ENCODE measurements at regions of chr12 and their contacts with region 1.

Region 1: DNA sequence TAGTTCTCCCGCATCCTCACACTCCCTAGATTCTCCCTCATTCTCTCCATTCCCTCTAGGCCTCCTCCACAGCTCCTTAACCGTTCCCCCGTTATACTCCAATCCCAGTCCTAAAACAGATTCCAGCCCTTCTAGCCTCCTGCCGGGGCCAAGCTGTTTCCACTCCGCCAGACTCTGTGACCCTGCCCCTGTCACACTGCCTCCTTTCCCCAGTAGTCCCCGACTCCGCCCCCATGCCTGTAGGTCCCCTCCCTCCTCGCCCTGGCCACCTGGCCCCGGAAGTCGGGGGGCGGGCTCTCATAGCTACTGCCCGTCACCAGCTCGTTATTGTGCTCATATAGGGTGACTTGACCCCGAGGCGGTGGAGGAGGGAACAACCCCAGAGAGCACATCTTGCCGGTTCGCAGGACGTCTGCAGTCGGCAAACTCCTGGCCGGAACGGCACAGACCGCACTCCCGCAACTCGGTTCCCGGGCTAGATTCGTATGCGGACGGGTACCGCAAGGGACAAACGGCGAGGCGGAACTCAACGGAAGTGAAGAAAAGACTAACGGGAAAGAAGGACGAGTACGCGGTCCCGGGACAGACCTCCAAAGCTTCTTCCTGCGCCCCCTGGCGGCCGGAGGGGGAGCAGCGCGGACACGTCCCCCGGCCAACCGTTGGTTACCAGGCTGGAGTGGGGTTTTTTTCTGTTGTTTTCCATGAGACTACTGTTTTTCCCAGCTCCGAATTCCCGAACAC is at the start of gene AAAS:
- DNase-seq: peak; percentile 99
- ATAC-seq: peak; percentile 86
- H3K4me3 Mint-ChIP-seq: peak within 1 kb of the TSS; percentile 92
- H3K27ac Mint-ChIP-seq: peak within 1 kb of the TSS; percentile 97
- H3K4me1 Mint-ChIP-seq: peaks cover 39% of the 10 kb centered on the region
- H3K27me3 Mint-ChIP-seq: no peaks in the 10 kb centered on the region
- total RNA-seq, gene AAAS: 60.9 to 61.7 TPM

Region 2: GRCh38 chr12:53113136-53113705 is 208.0 kb before region 1 on chr12:
- CTCF ChIA-PET with region 1: no interaction called
- DNase-seq: peak; percentile 29
- ATAC-seq: no peak
- H3K4me3 Mint-ChIP-seq: no peak overlapping the region
- H3K27ac Mint-ChIP-seq: no peak overlapping the region
- H3K4me1 Mint-ChIP-seq: no peaks in the 10 kb centered on the region
- H3K27me3 Mint-ChIP-seq: no peaks in the 10 kb centered on the region

Region 3: DNA sequence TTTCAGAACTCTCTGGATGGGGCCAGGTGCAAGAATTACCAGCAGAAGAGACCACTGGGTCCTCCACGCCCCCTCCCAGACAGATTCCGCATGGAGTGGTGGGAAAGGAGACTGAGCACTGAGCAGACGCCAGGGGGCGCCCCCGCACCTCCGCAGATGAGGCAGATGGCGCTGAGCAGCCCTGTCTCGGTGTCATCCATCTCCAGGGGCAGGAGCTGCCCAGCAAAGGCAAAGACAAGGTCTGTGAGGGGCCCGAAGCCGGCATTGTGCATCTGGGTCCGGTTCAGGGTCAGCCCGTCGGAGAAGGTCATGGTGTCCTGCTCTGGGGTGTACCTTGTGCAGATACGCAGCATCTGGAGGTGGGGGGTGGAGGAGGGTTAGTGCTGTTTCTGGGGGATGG is 107.9 kb before region 1 on chr12:
- CTCF ChIA-PET with region 1: interaction called, 102 read pairs
- DNase-seq: peak; percentile 88
- ATAC-seq: peak; percentile 73
- H3K4me3 Mint-ChIP-seq: no peak overlapping the region
- H3K27ac Mint-ChIP-seq: no peak overlapping the region
- H3K4me1 Mint-ChIP-seq: peaks cover 73% of the 10 kb centered on the region
- H3K27me3 Mint-ChIP-seq: no peaks in the 10 kb centered on the region

Region 4: GRCh38 chr12:53267999-53268647 is 53.1 kb before region 1 on chr12 and contains the start of gene ESPL1:
- CTCF ChIA-PET with region 1: interaction called, 26 read pairs
- DNase-seq: peak; percentile 92
- ATAC-seq: peak; percentile 96
- H3K4me3 Mint-ChIP-seq: peak within 1 kb of the TSS; percentile 100
- H3K27ac Mint-ChIP-seq: peak within 1 kb of the TSS; percentile 95
- H3K4me1 Mint-ChIP-seq: peaks cover 46% of the 10 kb centered on the region
- H3K27me3 Mint-ChIP-seq: no peaks in the 10 kb centered on the region
- total RNA-seq, gene ESPL1: 99.0 to 137 TPM

Region 5: DNA sequence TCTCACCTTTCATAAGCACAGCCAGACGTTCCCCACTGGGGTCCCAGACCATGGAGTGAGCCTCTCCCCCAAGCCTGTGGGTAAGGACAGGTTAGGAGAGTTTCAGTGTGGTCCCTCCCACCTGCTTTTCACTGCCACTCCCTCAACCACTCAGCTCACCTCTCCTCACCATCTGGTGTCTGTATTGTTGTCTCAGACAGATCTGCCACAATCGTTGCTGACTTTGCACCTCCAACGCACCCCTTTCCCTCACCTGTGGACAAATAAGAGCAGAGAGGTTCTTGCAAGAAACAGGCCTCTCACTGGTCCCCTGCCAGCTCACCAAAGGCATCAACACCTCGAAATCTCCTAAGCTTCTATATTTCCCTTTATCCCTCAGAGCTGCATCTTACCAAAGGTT is 13.0 kb before region 1 on chr12:
- CTCF ChIA-PET with region 1: interaction called, 83 read pairs
- DNase-seq: no peak
- ATAC-seq: no peak
- H3K4me3 Mint-ChIP-seq: no peak overlapping the region
- H3K27ac Mint-ChIP-seq: no peak overlapping the region
- H3K4me1 Mint-ChIP-seq: no peaks in the 10 kb centered on the region
- H3K27me3 Mint-ChIP-seq: no peaks in the 10 kb centered on the region

Region 6: DNA sequence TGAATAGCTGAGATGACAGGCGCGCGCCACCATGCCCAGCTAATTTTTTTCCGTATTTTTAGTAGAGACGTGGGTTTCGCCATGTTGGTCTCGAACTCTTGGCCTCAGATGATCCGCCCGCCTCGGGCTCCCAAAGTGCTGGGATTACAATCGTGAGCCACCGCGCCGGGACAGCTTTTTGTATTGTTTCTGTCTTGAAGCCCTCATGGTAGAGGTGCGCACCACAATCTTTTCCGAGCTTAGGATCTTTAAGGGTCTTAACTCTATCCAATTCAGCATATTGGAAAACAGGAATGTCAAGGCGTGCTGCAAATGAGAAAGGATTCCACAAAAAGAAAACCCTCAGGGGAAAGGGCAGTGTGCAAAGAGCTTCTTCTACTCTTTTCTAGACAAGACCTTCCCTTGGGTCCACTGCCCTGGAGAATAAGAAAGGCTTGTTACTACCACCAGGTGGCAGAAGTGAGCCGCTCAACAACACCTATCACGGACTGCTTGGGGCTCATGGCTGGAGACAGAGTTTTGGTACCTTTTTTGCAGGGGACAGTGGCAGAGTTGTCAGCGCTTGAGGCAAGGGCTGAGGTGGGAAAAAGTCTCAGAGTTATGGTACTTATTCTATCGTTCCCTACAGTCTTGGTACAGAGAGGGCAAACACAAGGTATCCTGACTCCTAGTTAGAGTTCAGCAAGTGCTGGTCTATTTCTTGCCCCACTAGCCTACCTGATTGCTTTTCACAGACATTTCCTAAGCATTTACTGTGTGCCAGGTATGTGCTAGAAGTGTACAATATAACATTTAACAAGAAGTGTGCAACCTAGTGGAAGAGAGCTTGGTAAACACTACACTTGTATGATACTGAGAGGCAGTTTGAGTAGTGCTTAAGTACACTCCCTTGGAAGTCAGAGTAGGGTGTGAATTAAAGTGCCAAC is 31.4 kb after region 1 on chr12:
- CTCF ChIA-PET with region 1: interaction called, 49 read pairs
- DNase-seq: peak; percentile 90
- ATAC-seq: peak; percentile 100
- H3K4me3 Mint-ChIP-seq: no peak overlapping the region
- H3K27ac Mint-ChIP-seq: peak overlapping the region; percentile 20
- H3K4me1 Mint-ChIP-seq: peaks cover 8% of the 10 kb centered on the region
- H3K27me3 Mint-ChIP-seq: no peaks in the 10 kb centered on the region

Region 7: DNA sequence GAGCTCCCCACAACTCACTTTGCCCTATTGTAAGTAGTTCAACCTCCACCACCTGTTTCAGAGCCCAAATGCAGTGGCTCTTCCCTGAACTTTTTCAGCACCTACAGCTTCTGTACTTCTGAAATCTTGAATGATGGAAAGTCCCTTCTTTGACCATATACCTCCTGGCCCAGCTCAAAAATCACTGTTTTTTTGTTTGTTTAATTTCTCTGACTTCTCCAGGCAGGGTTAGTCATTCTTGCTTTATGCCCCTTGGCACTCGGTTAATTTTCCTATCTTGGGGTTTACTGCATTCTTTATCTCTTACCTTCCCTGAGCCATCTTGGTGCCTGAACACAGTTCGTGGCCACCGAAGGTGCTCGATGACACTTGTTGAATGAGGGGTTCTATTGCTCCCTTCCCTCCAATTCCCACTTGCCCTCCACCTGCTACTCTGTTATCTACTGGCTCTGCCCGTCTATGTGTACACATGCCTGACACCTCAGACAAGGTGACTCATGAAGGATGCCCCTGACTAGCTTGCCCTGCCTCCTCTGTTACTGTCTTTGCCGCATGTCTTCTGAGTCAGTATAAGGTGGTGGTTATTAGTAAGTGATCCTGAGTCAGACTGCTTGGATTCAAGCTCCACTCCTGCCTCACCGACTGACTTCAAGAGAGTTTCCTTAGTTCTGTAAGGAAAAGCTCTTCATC is 106.8 kb after region 1 on chr12:
- CTCF ChIA-PET with region 1: interaction called, 36 read pairs
- DNase-seq: no peak
- ATAC-seq: peak; percentile 78
- H3K4me3 Mint-ChIP-seq: no peak overlapping the region
- H3K27ac Mint-ChIP-seq: no peak overlapping the region
- H3K4me1 Mint-ChIP-seq: peaks cover 3% of the 10 kb centered on the region
- H3K27me3 Mint-ChIP-seq: no peaks in the 10 kb centered on the region

Region 8: GRCh38 chr12:53464685-53465084 is 143.4 kb after region 1 on chr12:
- CTCF ChIA-PET with region 1: no interaction called
- DNase-seq: no peak
- ATAC-seq: no peak
- H3K4me3 Mint-ChIP-seq: no peak overlapping the region
- H3K27ac Mint-ChIP-seq: no peak overlapping the region
- H3K4me1 Mint-ChIP-seq: peaks cover 43% of the 10 kb centered on the region
- H3K27me3 Mint-ChIP-seq: no peaks in the 10 kb centered on the region

Region 9: DNA sequence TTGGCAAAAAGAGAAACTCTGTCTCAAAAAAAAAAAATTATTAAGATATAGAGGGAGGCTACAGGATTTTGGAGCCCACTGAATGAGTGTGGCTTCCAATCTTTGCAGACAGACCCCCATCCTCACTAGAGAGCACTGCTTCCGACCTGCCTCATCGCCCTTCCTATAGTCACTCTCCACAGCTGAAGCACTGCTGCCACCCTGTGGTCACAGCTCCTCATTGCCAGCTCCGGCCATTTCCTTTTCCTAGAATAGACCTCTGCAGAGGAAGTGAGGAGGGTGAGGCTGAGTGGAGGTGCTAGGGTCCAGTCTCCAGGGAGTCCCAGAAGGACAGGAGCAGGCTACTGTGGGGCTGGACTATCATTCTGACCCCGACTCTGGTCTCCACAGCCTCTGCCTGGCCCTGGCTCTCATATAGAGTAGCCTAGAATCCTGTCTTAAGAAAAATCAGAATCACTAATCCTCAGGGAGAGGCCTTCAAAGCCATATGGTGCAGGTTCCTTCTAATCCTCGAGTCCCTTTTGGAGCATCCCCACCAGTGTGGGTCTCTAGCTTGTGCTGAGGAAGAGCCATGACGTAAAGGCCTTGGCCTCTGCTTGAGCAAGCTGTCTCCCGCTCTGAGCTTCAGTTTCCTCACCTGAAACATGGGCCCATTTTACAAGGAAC is 187.4 kb after region 1 on chr12:
- CTCF ChIA-PET with region 1: interaction called, 31 read pairs
- DNase-seq: peak; percentile 92
- ATAC-seq: peak; percentile 98
- H3K4me3 Mint-ChIP-seq: no peak overlapping the region
- H3K27ac Mint-ChIP-seq: peak overlapping the region; percentile 78
- H3K4me1 Mint-ChIP-seq: peaks cover 13% of the 10 kb centered on the region
- H3K27me3 Mint-ChIP-seq: no peaks in the 10 kb centered on the region